Activated naive CD4-positive, alpha-beta T cell treated with anti-CD3 and anti-CD28 coated beads for 36 hours (primary cell): ENCODE measurements at regions of chr14 and their contacts with region 1.

Region 1: DNA sequence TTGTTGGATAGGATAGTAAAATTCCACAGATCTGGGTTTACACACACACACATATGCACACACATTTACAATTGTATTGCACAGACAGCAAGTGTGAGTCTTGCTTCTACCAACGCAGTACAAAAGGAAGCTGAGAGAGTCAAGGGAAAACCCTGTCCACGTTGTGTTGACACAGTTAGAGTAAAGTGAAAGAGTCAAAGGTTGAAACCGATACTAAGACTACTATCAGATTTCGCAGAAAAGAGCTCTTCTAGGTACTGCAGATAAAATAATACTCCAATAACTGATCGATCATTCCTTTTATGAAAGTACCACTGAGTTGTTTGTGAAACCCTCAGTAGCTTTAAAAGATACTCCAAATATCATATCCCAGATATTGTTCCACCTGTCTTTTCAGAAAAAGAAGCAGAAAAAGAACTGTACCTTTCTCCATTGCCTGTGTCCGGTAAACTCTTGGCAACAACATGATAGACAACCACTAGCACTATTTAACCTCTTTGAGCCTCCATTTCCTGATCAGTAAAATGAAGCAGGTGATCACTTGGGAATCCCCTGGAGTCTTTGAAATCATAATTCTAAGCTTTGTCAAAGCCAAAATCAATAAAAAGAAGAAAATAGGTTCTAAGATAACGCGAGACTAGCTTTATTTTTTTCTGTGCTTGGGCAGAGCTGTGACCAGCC is 224.6 kb upstream of the FOXN3 start:
- DNase-seq: peak; percentile 61
- H3K4me3 Mint-ChIP-seq: peak overlapping the region; percentile 57
- H3K27ac Mint-ChIP-seq: peak overlapping the region; percentile 90
- H3K4me1 Mint-ChIP-seq: peaks cover 62% of the 10 kb centered on the region
- H3K27me3 Mint-ChIP-seq: no peaks in the 10 kb centered on the region

Region 2: DNA sequence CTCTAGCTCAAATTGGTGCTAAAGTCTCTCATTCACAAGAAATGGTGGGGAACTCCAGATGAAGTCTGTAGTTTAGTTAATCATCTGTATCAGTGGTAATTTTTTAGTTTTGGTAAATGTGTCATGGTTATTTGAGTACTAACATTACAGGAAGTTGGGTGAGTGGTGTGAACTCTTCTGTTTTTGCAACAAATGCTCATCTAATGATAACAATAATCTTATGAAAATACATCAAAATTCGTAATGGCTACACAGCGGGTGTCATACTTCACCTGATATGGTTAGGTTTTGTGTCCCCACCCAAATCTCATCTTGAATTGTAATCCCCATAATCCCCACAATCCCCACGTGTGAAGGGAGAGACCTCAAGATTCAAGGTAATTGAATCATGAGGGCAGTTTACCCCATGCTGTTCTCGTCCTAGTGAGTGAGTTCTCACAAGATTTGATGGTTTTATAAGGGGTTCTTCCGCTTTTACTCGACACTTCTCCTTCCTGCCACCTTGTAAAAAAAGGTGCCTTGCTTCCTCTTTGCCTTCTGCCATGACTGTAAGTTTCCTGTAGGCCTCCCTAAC is 15.3 kb before region 1 on chr14:
- CTCF ChIA-PET with region 1: interaction called, 8 read pairs
- intact Hi-C with region 1: loop called (anchors 1 kb)
- DNase-seq: peak; percentile 46
- H3K4me3 Mint-ChIP-seq: no peak overlapping the region
- H3K27ac Mint-ChIP-seq: peak overlapping the region; percentile 96
- H3K4me1 Mint-ChIP-seq: peaks cover 79% of the 10 kb centered on the region
- H3K27me3 Mint-ChIP-seq: no peaks in the 10 kb centered on the region